ENCODE measurements at regions of chr6 and their contacts with region 1.

Region 1: DNA sequence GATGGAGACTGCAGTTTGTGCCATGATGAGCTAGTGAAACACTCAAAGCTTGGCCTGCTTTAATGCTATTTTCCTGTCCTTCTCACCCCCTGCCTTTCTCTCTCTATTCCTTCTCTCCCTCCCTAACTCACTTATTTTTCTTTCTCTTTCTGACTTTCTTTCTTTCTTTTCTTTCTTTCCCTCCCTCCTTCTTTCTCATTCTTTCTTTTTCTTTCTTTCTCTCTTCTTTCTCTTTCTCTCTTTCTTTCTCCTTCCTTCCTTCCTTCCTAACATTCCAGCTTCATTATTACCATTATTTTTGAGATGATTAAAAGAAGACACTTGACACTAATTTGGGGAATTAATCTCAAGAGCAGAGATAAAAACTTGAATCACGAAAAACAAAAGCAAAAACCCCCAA is 39.5 kb upstream of the SLC22A23 start:
- DNase-seq: no peak
- ATAC-seq: no peak
- H3K4me3 ChIP-seq: no peak overlapping the region
- H3K27ac ChIP-seq: no peak overlapping the region
- H3K4me1 ChIP-seq: no peaks in the 10 kb centered on the region
- H3K27me3 ChIP-seq: no peaks in the 10 kb centered on the region

Region 2: GRCh38 chr6:3312604-3313231 is 183.7 kb before region 1 on chr6:
- intact Hi-C with region 1: no loop called
- DNase-seq: peak; percentile 69 to 73
- ATAC-seq: no peak
- H3K4me3 ChIP-seq: no peak overlapping the region
- H3K27ac ChIP-seq: no peak overlapping the region
- H3K4me1 ChIP-seq: no peaks in the 10 kb centered on the region
- H3K27me3 ChIP-seq: no peaks in the 10 kb centered on the region

Region 3: DNA sequence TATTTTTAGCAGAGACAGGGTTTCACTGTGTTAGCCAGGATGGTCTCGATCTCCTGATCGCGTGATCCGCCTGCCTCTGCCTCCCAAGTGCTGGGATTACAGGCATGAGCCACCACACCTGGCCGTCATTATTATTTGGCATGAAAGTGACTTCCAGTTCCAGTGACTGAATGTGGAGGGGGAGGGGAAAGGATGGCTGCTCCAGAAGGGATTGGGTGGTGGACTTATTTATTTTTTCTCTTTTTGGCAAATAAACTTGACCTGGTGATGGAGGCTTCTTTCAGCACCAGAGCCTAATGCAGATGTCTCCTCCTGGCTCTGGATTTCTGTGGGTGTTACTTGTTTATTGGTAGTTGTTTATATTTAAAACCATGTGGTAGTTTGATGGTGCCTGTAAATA is 22.6 kb before region 1 on chr6:
- intact Hi-C with region 1: loop called in 1 of 2 experiments (anchors 1 kb)
- DNase-seq: no peak
- ATAC-seq: no peak
- H3K4me3 ChIP-seq: no peak overlapping the region
- H3K27ac ChIP-seq: no peak overlapping the region
- H3K4me1 ChIP-seq: no peaks in the 10 kb centered on the region
- H3K27me3 ChIP-seq: no peaks in the 10 kb centered on the region